ENCODE measurements at regions of chr2 and their contacts with region 1.

Region 1: GRCh38 chr2:65278531-65278981 is 50.9 kb downstream of the ACTR2 start:
- DNase-seq: peak; percentile 83
- H3K4me3 ChIP-seq: no peak overlapping the region
- H3K27ac ChIP-seq: no peak overlapping the region
- H3K4me1 ChIP-seq: peaks cover 52% of the 10 kb centered on the region
- H3K27me3 ChIP-seq: no peaks in the 10 kb centered on the region
- CTCF ChIP-seq: no peak

Region 2: DNA sequence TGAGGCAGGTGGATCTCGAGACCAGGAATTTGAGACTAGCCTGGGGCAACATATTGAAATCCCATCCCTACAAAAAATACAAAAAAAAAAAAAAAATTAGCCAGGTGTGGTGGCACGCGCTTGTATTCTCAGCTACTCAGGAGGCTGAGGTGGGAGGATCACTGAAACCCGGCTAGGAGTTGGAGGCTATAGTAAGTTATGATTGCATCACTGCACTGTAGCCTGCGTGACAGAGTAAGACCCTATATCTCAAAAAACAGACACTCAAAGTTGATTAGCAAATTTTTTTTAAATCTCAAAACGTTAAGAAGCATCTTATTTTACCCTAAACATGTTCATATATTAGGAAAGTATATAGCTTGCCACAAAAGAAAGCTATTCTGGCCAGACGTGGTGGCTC is 156.2 kb before region 1 on chr2:
- CTCF ChIA-PET with region 1: no interaction called
- POLR2A ChIA-PET with region 1: interaction called, 12 read pairs
- intact Hi-C with region 1: no loop called
- DNase-seq: no peak
- H3K4me3 ChIP-seq: no peak overlapping the region
- H3K27ac ChIP-seq: no peak overlapping the region
- H3K4me1 ChIP-seq: peaks cover 22% of the 10 kb centered on the region
- H3K27me3 ChIP-seq: no peaks in the 10 kb centered on the region
- CTCF ChIP-seq: no peak

Region 3: DNA sequence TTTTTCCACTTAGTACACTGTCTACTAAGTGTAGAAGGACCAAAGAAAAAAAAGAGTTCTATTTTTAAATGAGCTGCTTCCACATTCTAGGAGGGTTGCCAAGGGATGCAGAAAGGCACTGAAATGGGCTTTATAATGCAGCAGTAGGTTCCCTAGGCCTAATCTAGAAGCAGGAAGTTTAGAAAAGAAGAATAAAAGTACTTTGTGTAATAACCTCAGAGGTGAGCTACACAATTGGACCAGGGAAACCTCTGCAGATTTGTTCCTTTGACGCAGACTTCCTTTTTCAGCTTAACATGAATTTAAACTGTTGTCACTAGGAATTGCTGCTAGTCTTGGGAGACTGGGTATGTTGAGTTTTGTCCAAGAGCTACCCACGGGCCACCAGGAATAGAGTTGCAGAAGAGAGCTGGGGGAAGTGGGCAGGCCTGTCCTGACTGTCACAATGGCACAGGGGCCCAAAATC is 114.1 kb before region 1 on chr2:
- CTCF ChIA-PET with region 1: no interaction called
- POLR2A ChIA-PET with region 1: no interaction called
- intact Hi-C with region 1: no loop called
- DNase-seq: no peak
- H3K4me3 ChIP-seq: no peak overlapping the region
- H3K27ac ChIP-seq: no peak overlapping the region
- H3K4me1 ChIP-seq: no peaks in the 10 kb centered on the region
- H3K27me3 ChIP-seq: no peaks in the 10 kb centered on the region
- CTCF ChIP-seq: no peak

Region 4: GRCh38 chr2:65458999-65459398 is 180.4 kb after region 1 on chr2:
- CTCF ChIA-PET with region 1: no interaction called
- POLR2A ChIA-PET with region 1: interaction called, 10 read pairs
- intact Hi-C with region 1: no loop called
- DNase-seq: no peak
- H3K4me3 ChIP-seq: no peak overlapping the region
- H3K27ac ChIP-seq: no peak overlapping the region
- H3K4me1 ChIP-seq: peaks cover 3% of the 10 kb centered on the region
- H3K27me3 ChIP-seq: no peaks in the 10 kb centered on the region
- CTCF ChIP-seq: no peak